CD4-positive, alpha-beta T cell (primary cell): ENCODE measurements at regions of chr14 and their contacts with region 1.

Region 1: GRCh38 chr14:75660630-75661494 is at the starts of genes ERG28 and TTLL5:
- DNase-seq: peak; percentile 93 to 99 (median 96)
- ATAC-seq: peak; percentile 93
- H3K4me3 ChIP-seq: peak within 1 kb of the TSS; percentile 96
- H3K4me3 Mint-ChIP-seq: peak within 1 kb of the TSS; percentile 95
- H3K27ac ChIP-seq: peak within 1 kb of the TSS; percentile 87 to 91
- H3K27ac Mint-ChIP-seq: peak within 1 kb of the TSS; percentile 91
- H3K4me1 ChIP-seq: peaks cover 16% of the 10 kb centered on the region
- H3K4me1 Mint-ChIP-seq: peaks cover 47% of the 10 kb centered on the region
- H3K27me3 ChIP-seq: no peaks in the 10 kb centered on the region
- H3K27me3 Mint-ChIP-seq: no peaks in the 10 kb centered on the region
- CTCF ChIP-seq: no peak
- total RNA-seq, gene ERG28: 5.7 to 5.8 TPM
- total RNA-seq, gene TTLL5: 19.8 to 26.4 TPM

Region 2: GRCh38 chr14:74712499-74713394 is 948.1 kb before region 1 on chr14 and contains the starts of genes AREL1 and FCF1:
- CTCF ChIA-PET with region 1: no interaction called
- POLR2A ChIA-PET with region 1: no interaction called
- intact Hi-C with region 1: loop called in 1 of 2 experiments (anchors 10 kb)
- DNase-seq: peak; percentile 62 to 93 (median 70)
- ATAC-seq: peak; percentile 92
- H3K4me3 ChIP-seq: peak within 1 kb of the TSS; percentile 76
- H3K4me3 Mint-ChIP-seq: peak within 1 kb of the TSS; percentile 90
- H3K27ac ChIP-seq: peak within 1 kb of the TSS; percentile 76 to 81
- H3K27ac Mint-ChIP-seq: peak within 1 kb of the TSS; percentile 92
- H3K4me1 ChIP-seq: peaks cover 12% of the 10 kb centered on the region
- H3K4me1 Mint-ChIP-seq: peaks cover 65% of the 10 kb centered on the region
- H3K27me3 ChIP-seq: no peaks in the 10 kb centered on the region
- H3K27me3 Mint-ChIP-seq: no peaks in the 10 kb centered on the region
- CTCF ChIP-seq: no peak
- total RNA-seq, gene AREL1: 30.6 to 35.9 TPM
- total RNA-seq, gene FCF1: 31.9 to 32.9 TPM

Region 3: GRCh38 chr14:75126679-75127473 is 534.0 kb before region 1 on chr14 and contains the start of gene NEK9:
- CTCF ChIA-PET with region 1: no interaction called
- POLR2A ChIA-PET with region 1: interaction called, 5 read pairs
- intact Hi-C with region 1: loop called in 1 of 2 experiments (anchors 5 kb)
- DNase-seq: peak; percentile 82 to 93 (median 87)
- ATAC-seq: peak; percentile 82
- H3K4me3 ChIP-seq: peak within 1 kb of the TSS; percentile 92
- H3K4me3 Mint-ChIP-seq: peak within 1 kb of the TSS; percentile 99
- H3K27ac ChIP-seq: peak within 1 kb of the TSS; percentile 89 to 93
- H3K27ac Mint-ChIP-seq: peak within 1 kb of the TSS; percentile 90
- H3K4me1 ChIP-seq: peaks cover 36% of the 10 kb centered on the region
- H3K4me1 Mint-ChIP-seq: peaks cover 44% of the 10 kb centered on the region
- H3K27me3 ChIP-seq: no peaks in the 10 kb centered on the region
- H3K27me3 Mint-ChIP-seq: no peaks in the 10 kb centered on the region
- CTCF ChIP-seq: no peak
- total RNA-seq, gene NEK9: 53.5 to 54.1 TPM

Region 4: DNA sequence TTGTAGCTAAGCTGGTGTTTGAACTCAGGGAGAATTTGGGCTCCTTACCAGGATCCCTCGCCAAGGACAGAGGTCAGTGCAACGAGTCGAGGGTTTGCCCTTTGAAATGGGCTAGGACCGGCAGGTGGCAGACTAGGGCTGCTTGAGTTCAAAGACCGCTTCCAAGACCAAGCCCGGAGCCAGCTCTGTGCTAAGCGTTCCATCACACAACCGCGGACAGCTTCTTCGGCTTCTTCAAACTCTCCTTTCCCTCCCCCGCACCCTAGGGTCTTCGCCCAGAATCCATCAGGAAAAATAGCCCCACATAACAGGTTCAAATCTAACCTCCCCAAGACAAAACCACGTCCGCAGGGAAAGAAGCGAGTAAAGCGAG is 83.1 kb before region 1 on chr14:
- CTCF ChIA-PET with region 1: interaction called, 47 read pairs
- POLR2A ChIA-PET with region 1: interaction called, 10 read pairs
- intact Hi-C with region 1: no loop called
- DNase-seq: peak; percentile 46 to 85 (median 67)
- ATAC-seq: peak; percentile 85
- H3K4me3 ChIP-seq: peak overlapping the region; percentile 81
- H3K4me3 Mint-ChIP-seq: peak overlapping the region; percentile 92
- H3K27ac ChIP-seq: no peak overlapping the region
- H3K27ac Mint-ChIP-seq: peak overlapping the region; percentile 64
- H3K4me1 ChIP-seq: peaks cover 28% of the 10 kb centered on the region
- H3K4me1 Mint-ChIP-seq: peaks cover 25% of the 10 kb centered on the region
- H3K27me3 ChIP-seq: no peaks in the 10 kb centered on the region
- H3K27me3 Mint-ChIP-seq: no peaks in the 10 kb centered on the region
- CTCF ChIP-seq: peak; percentile 83

Region 5: GRCh38 chr14:75642056-75642455 is 18.8 kb before region 1 on chr14:
- CTCF ChIA-PET with region 1: no interaction called
- POLR2A ChIA-PET with region 1: no interaction called
- intact Hi-C with region 1: no loop called
- DNase-seq: no peak
- ATAC-seq: no peak
- H3K4me3 ChIP-seq: no peak overlapping the region
- H3K4me3 Mint-ChIP-seq: no peak overlapping the region
- H3K27ac ChIP-seq: no peak overlapping the region
- H3K27ac Mint-ChIP-seq: no peak overlapping the region
- H3K4me1 ChIP-seq: no peaks in the 10 kb centered on the region
- H3K4me1 Mint-ChIP-seq: no peaks in the 10 kb centered on the region
- H3K27me3 ChIP-seq: no peaks in the 10 kb centered on the region
- H3K27me3 Mint-ChIP-seq: no peaks in the 10 kb centered on the region
- CTCF ChIP-seq: no peak